Heart left ventricle (tissue), 16 donors: ENCODE measurements at regions of chr12 and their contacts with region 1.

Region 1: GRCh38 chr12:91382081-91382543 is 199.5 kb upstream of the DCN start:
- DNase-seq: peak; percentile 75 to 89 (median 84)
- ATAC-seq: peak; percentile 80 to 88 (median 84)
- H3K4me3 ChIP-seq: peak overlapping the region; percentile 4 to 61 (median 50)
- H3K27ac ChIP-seq: peak overlapping the region; percentile 37 to 86 (median 73)
- H3K4me1 ChIP-seq: peaks cover 0 to 6% (median 0%) of the 10 kb centered on the region in 12 donors
- H3K27me3 ChIP-seq: no peaks in the 10 kb centered on the region
- CTCF ChIP-seq: peak; percentile 81 to 97 (median 90)
- POLR2A ChIP-seq: no peak

Region 2: GRCh38 chr12:91804533-91804932 is 422.4 kb after region 1 on chr12:
- intact Hi-C with region 1: loop called in 1 of 10 experiments (anchors 10 kb)
- DNase-seq: no peak
- ATAC-seq: no peak
- H3K4me3 ChIP-seq: no peak overlapping the region
- H3K27ac ChIP-seq: no peak overlapping the region
- H3K4me1 ChIP-seq: no peaks in the 10 kb centered on the region
- H3K27me3 ChIP-seq: no peaks in the 10 kb centered on the region
- CTCF ChIP-seq: no peak
- POLR2A ChIP-seq: no peak

Region 3: GRCh38 chr12:91825999-91826398 is 443.9 kb after region 1 on chr12:
- intact Hi-C with region 1: loop called in 1 of 10 experiments (anchors 10 kb)
- DNase-seq: no peak
- ATAC-seq: no peak
- H3K4me3 ChIP-seq: no peak overlapping the region
- H3K27ac ChIP-seq: no peak overlapping the region
- H3K4me1 ChIP-seq: no peaks in the 10 kb centered on the region
- H3K27me3 ChIP-seq: no peaks in the 10 kb centered on the region
- CTCF ChIP-seq: no peak
- POLR2A ChIP-seq: no peak

Region 4: DNA sequence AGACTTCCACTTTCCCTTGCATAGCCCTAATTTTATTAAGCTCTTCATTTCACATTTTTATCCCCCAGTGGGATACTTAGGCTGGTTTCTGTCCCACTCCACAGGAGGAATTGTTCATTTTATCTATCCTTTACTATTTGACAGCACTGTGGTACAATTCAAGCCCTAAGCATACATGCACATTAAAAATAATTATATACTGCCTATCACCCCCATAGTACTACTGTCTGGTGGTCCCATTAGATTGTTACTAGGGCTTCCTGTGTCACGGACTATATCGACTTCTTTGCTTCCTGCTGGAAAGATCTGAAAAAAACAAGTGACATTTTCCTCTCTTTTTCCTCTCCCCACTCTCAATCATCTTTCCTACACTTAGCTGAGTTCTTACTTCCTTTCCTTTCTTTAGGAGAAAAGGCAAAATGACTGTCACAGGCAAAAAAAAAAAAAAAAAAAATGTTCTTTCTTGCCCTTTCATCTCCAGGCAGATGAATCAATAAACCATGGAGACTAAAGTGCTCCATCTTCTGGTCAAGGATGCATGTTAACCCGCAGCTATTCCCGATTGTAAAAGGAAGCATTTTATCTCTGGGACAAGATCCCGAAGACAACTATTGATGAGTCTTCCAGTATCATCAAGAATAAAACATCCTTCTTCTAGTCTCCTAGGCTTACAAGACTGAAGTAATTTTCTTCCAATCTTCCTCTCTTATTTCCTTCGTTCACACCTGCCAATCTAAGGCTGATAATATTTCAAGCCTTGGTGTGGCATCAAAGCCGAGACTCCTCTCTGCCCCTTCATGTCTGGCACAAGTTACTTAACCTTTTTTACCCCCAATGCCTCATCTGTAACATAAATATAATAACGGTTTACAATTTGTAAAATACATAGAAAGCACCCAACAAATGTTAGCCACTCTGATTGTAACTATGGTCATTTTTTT is 1226.3 kb after region 1 on chr12:
- intact Hi-C with region 1: loop called in 2 of 10 experiments (anchors 10 kb)
- DNase-seq: no peak
- ATAC-seq: peak in 1 of 4 donors; percentile 45
- H3K4me3 ChIP-seq: no peak overlapping the region
- H3K27ac ChIP-seq: no peak overlapping the region
- H3K4me1 ChIP-seq: peaks cover 0 to 26% (median 0%) of the 10 kb centered on the region in 12 donors
- H3K27me3 ChIP-seq: no peaks in the 10 kb centered on the region
- CTCF ChIP-seq: peak; percentile 28 to 65 (median 48)
- POLR2A ChIP-seq: no peak